ENCODE measurements at regions of chr3 and their contacts with region 1.

Region 1: DNA sequence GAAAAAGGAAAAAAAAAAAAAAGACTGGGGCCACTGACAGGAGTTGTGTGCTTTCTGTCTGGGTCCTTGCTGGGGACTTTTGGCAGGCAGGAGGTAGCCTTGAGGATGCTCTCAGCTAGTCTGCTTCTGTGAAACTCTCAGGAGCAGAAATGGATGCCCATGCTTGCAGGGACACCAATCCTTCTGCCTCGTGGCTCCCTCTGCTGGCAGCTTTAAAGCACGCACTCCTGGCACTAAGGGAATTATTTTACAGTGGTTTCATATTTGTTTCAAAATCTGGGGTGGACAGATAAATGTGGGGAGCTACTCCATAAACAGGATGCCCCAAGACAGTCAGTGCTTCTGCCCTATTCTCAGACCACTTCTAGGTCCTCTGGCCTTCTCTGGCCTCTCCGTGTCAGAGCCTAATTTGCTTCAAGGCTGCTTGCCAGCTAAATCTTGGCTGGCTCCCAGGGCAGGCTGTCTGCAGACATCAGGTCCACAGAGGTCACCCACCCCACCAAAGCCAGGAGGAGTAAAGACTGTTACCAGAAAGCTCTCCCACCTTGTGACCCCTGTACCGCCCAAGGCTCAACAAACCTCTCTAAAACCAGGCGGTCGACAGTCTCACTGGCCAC is 17.1 kb downstream of the TRAIP start:
- DNase-seq: peak; percentile 75 to 90
- ATAC-seq: peak; percentile 79 to 98 (median 92)
- H3K4me3 ChIP-seq: no peak overlapping the region
- H3K27ac ChIP-seq: no peak overlapping the region
- H3K4me1 ChIP-seq: peaks cover 14% of the 10 kb centered on the region
- H3K27me3 ChIP-seq: no peaks in the 10 kb centered on the region
- CTCF ChIP-seq: peak; percentile 92

Region 2: GRCh38 chr3:49703443-49703927 is 135.8 kb before region 1 on chr3:
- intact Hi-C with region 1: loop called in 1 of 2 experiments (anchors 1 kb)
- DNase-seq: peak; percentile 63 to 83
- ATAC-seq: peak; percentile 84 to 91 (median 88)
- H3K4me3 ChIP-seq: no peak overlapping the region
- H3K27ac ChIP-seq: no peak overlapping the region
- H3K4me1 ChIP-seq: no peaks in the 10 kb centered on the region
- H3K27me3 ChIP-seq: no peaks in the 10 kb centered on the region
- CTCF ChIP-seq: peak; percentile 86

Region 3: GRCh38 chr3:49719214-49719884 is 120.0 kb before region 1 on chr3 and contains the start of gene AMIGO3:
- intact Hi-C with region 1: loop called in 1 of 2 experiments (anchors 5 kb)
- DNase-seq: peak; percentile 97
- ATAC-seq: peak; percentile 61 to 75 (median 66)
- H3K4me3 ChIP-seq: peak within 1 kb of the TSS; percentile 63
- H3K27ac ChIP-seq: peak within 1 kb of the TSS; percentile 26
- H3K4me1 ChIP-seq: peaks cover 40% of the 10 kb centered on the region
- H3K27me3 ChIP-seq: no peaks in the 10 kb centered on the region
- CTCF ChIP-seq: peak; percentile 56
- total RNA-seq, gene AMIGO3: 0.36 TPM in 1 of 4 donors, not detected in the others

Region 4: DNA sequence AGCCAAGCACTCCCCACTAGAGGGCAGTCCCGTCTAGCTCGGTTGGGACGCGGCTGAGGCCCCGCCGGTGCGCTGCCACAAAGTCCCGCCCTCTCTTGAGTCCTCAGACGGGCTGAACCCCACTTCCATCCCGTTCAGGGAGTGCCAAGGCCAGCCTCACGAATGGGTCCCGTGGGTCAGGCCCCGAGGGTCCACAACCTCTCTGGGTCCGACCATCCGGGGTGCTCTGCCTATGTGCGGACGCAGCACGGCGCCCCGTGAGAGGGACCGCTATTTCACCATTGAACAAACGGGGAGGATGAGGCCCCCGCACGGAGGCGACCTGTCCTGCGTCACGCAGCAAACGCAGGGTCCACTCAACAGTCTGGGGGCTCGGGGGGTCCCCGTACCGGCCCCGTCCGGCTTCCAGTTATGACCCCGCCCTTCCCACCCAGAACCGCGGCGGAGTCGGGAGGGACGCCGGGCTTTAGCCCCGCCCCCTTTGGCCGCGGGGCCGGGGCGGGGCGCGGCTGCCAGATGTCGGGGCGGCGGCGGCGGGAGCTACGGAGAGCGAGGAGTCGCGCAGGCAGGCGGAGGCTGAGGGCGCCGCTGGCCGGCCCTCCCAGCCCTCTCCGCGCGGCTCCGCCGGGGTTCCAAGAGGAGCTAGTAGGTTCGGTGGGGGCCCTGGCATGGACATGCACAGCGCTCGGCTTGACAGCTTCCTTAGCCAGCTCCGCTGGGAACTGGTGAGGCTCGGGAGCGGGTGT is 36.4 kb before region 1 on chr3 and contains the start of gene INKA1:
- intact Hi-C with region 1: loop called (anchors 1 kb)
- DNase-seq: peak; percentile 90 to 94
- ATAC-seq: peak; percentile 83 to 89 (median 84)
- H3K4me3 ChIP-seq: peak within 1 kb of the TSS; percentile 76
- H3K27ac ChIP-seq: peak within 1 kb of the TSS; percentile 93
- H3K4me1 ChIP-seq: peaks cover 38% of the 10 kb centered on the region
- H3K27me3 ChIP-seq: no peaks in the 10 kb centered on the region
- CTCF ChIP-seq: peak; percentile 88
- total RNA-seq, gene INKA1: 2.2 to 20.1 (median 3.6) TPM

Region 5: DNA sequence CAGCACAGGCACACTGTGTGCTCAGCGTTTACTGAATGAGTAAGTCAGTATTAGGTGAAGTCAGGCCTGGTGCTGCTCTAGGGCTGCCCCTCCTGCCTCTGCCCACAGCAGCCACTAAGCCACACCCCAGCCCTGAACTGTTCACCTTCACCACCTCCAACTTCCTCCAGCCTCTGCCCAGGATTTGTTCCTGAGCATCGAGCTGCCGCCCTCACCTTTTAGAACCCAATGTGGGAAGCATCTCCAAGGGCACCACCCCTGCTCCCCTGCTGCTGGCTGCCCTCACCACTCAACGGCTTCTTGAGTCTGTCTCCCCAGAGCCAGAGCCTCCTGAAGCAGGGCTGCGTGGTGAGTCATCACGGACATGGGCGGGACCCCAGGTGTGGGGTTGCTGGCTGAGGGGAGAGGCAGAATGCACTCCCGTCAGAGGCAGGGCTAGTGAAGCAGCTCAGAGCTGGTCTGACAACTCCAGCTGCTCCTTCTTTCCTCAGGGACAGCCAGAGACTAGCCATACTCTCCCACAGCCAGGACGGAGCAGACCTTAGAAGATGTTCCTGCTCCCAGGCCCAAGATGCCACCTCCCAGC is 477.4 kb after region 1 on chr3:
- intact Hi-C with region 1: no loop called
- DNase-seq: no peak
- ATAC-seq: no peak
- H3K4me3 ChIP-seq: no peak overlapping the region
- H3K27ac ChIP-seq: no peak overlapping the region
- H3K4me1 ChIP-seq: peaks cover 47% of the 10 kb centered on the region
- H3K27me3 ChIP-seq: no peaks in the 10 kb centered on the region
- CTCF ChIP-seq: no peak

Measured in psoas muscle (tissue), 8 donors.